Adrenal gland (tissue), 19 donors: ENCODE measurements at regions of chr20 and their contacts with region 1.

Region 1: DNA sequence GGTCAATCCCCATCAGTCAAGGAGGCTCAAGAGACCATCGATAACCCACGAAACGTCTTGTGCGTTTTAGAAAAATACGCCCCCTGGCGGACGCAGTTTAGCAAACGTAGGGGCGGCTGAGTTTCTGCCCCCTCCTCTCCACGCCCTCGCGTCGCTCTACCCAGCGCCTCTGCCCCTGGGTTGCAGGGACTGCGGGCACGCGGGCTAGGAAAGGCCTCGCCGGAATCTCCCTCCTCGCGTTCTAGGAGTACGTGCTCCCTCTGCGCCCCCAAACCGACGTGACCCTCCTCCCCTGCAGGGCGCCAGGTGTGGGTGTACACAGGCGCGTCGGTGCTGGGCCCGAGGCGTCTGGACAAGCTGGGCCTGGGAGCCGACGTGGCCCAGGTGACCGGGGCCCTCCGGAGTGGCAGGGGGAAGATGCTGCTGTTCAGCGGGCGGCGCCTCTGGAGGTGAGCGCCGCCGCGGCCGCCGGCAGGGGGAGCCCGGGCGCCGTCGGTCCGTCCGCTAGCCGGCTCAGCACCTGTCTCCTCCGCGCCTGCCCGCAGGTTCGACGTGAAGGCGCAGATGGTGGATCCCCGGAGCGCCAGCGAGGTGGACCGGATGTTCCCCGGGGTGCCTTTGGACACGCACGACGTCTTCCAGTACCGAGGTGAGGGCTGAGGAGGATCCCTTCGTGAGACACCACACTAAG is 5.3 kb downstream of the MMP9 start:
- DNase-seq: peak in 6 of 7 donors; percentile 41 to 65 (median 56)
- H3K4me3 ChIP-seq: no peak overlapping the region
- H3K27ac ChIP-seq: no peak overlapping the region
- H3K4me1 ChIP-seq: peaks cover 0 to 10% of the 10 kb centered on the region in 2 donors
- H3K27me3 ChIP-seq: peaks cover 38% of the 10 kb centered on the region
- CTCF ChIP-seq: peak; percentile 48 to 79 (median 66)
- POLR2A ChIP-seq: no peak

Region 2: DNA sequence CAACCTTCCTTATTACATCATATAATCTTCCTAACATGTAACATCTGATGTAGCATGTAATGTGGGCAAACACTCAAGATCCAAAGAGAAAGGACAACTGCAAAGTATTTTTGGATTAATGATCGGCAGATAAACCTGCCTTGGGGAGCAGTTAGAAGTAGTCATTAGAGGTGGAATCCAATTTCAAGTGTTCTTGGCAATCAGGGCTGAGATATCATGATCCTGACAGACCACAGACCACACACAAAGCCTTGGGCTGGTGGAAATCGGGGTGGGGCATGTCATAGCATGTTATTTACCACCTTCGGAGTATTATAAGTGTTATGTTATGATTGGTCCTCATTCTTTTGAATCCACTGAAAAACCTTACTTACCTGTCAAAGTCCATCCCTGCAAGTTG is 59.5 kb after region 1 on chr20:
- intact Hi-C with region 1: no loop called
- DNase-seq: no peak
- H3K4me3 ChIP-seq: no peak overlapping the region
- H3K27ac ChIP-seq: no peak overlapping the region
- H3K4me1 ChIP-seq: peaks cover 0 to 10% of the 10 kb centered on the region in 2 donors
- H3K27me3 ChIP-seq: no peaks in the 10 kb centered on the region
- CTCF ChIP-seq: no peak
- POLR2A ChIP-seq: no peak

Region 3: GRCh38 chr20:46089417-46090388 is 75.7 kb after region 1 on chr20 and contains the start of gene NCOA5:
- intact Hi-C with region 1: loop called in 1 of 2 experiments (anchors 10 kb)
- DNase-seq: peak; percentile 96 to 97 (median 96)
- H3K4me3 ChIP-seq: peak within 1 kb of the TSS; percentile 39 to 99 (median 68)
- H3K27ac ChIP-seq: peak within 1 kb of the TSS; percentile 93 to 100 (median 99)
- H3K4me1 ChIP-seq: peaks cover 29 to 49% of the 10 kb centered on the region in 2 donors
- H3K27me3 ChIP-seq: no peaks in the 10 kb centered on the region
- CTCF ChIP-seq: peak in 2 of 6 experiments; percentile 3 to 30
- POLR2A ChIP-seq: peak; percentile 83 to 91
- total RNA-seq, gene NCOA5: 17.8 to 44.8 (median 25.9) TPM

Region 4: DNA sequence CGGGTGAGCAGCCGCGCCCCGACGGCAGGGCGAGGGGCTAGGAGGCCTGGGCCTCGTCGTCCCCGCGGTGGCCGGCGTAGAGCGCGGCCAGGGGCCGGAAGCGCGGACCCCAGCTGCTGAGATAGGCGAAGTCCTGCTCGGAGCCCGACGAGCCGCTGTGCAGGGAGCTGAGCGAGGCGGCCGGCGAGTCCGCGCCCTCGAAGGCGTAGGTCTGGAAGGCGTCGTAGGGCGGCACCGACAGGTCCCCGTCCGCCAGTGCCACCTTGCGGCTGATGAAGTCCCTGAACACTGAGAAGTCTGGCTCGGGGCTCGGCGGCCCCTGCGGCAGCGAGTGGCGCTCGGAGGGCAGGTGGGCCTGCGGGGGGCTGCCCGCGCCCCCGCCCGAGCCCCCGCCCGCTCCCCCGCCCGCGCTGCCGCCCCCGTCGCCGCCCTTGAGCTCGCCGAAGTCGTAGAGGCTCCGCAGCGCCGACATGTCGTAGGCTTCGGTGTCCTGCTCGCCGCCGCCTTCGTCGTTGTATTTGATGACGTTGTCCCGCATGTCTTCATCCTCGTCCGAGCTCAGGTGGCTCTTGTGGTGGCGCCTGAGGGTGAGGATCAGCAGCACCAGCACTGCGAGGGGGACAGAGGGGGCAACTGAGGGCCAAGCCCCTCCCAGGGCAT is 160.6 kb after region 1 on chr20:
- intact Hi-C with region 1: loop called in 1 of 2 experiments (anchors 10 kb)
- DNase-seq: peak; percentile 55 to 87 (median 79)
- H3K4me3 ChIP-seq: no peak overlapping the region
- H3K27ac ChIP-seq: no peak overlapping the region
- H3K4me1 ChIP-seq: no peaks in the 10 kb centered on the region
- H3K27me3 ChIP-seq: peaks cover 11% of the 10 kb centered on the region
- CTCF ChIP-seq: peak; percentile 22 to 76 (median 53)
- POLR2A ChIP-seq: no peak